ENCODE measurements at regions of chr20 and their contacts with region 1.

Region 1: DNA sequence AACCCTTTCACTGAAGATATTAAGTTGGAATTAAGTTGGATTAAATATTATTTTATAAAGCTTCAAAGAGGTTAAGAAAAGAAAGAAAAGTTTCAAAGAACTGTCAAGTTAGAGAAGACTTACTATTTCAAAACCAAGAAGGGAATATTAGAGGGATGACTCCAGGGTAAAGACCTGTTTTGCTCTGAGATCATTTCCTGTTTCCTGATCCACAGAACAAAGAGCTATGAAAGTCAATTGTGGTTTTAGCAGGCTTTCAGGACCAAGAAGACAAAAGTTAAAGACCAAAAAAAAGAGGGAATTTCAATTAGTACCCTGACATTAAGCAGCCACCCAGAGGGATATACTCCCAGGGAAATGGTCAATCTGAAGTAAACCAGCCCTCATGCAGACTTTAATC is 19.4 kb downstream of the ESF1 start:
- DNase-seq: peak; percentile 67
- H3K4me3 ChIP-seq: no peak overlapping the region
- H3K27ac ChIP-seq: peak overlapping the region; percentile 94
- H3K4me1 ChIP-seq: peaks cover 10% of the 10 kb centered on the region
- H3K27me3 ChIP-seq: no peaks in the 10 kb centered on the region
- CTCF ChIP-seq: no peak
- POLR2A ChIP-seq: no peak

Region 2: DNA sequence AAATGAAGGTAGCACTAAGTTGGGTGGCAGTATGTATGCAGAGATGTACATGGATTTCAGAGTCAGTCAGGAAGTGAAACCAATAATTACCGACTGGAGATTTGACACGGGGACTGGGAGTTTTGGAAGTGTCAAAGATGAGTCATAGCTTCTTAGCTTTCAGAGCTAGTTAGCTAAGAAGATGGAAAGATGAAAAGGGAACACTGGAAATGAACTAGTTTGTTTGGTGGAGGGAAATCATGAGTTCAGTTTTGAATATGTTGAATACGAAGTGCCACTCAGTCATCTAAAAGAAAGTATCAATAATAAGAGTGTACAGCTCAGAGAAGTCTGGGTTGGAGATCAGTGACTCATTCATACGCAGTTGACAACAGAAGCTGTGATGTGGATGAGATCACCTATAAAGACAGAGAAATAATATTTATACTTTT is 11.9 kb after region 1 on chr20:
- CTCF ChIA-PET with region 1: interaction called, 31 read pairs
- POLR2A ChIA-PET with region 1: no interaction called
- dilution Hi-C with region 1: no loop called
- intact Hi-C with region 1: no loop called
- DNase-seq: peak; percentile 48
- H3K4me3 ChIP-seq: no peak overlapping the region
- H3K27ac ChIP-seq: peak overlapping the region; percentile 61
- H3K4me1 ChIP-seq: peaks cover 22% of the 10 kb centered on the region
- H3K27me3 ChIP-seq: no peaks in the 10 kb centered on the region
- CTCF ChIP-seq: no peak
- POLR2A ChIP-seq: no peak